Left colon (tissue), 2 donors: ENCODE measurements at regions of chr18 and their contacts with region 1.

Region 1: DNA sequence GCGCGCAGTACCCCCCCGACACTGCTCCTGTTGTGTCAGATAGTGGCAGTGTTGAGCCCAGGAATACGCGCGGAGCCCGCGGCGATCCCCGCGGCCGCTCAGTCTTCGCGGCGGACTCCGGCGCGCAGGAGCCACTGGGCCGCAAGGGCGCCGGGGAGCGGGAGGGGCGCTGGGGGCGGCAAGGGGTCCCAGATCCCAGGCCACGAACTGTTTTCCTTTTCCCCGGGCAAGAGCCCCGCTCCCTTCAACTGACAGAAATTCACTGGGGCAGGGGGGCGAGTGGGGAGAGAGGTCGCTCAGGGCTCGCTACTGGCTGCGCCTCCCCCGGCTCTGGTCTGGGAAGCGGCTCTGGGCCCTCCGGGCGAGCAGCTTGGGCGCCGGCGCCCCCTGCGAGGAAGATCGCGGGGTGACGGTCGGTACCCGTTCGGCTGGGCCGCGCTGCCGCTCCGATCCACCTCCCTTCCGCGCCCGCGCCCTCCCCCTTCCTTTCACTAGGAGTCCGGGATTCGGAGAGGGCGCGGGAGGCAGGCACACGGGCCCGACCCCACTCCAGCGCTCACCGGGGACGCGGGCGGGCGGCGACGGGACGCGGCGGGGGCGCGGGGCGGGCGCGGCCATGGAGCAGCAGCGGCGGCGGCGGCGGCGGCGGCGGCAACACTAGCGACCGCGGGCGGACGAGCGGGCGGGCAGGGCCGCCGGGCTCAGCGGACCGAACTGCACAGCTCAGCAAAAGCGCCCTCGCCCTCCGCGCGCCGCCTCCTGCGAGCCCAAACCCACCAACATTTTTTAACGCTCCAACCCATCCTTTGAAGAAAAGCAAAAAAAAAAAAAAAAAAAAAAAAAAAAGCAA is 1.4 kb upstream of the SETBP1 start:
- DNase-seq: peak; percentile 89
- ATAC-seq: peak; percentile 96

Region 2: DNA sequence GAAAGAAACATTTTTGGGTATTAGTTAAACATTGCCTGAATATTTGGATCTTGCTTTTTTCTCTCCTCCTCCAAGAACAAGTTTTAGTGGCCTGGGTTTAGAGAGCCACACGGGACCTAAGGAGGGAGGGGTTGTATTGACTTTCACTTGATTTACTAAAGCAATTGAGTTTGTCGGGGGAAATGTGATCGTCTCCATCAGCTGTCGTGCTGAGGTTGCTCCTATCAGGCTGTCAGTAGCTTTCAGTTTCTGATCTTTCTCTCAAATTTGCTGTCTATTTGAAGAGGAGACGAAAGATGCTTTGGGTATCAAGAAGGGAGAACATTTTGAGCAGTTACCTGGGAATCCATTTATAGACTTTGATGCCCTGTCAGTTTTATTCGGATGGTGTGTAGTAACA is 107.4 kb after region 1 on chr18:
- intact Hi-C with region 1: loop called in 1 of 2 experiments (anchors 10 kb)
- DNase-seq: no peak
- ATAC-seq: no peak

Region 3: GRCh38 chr18:44895176-44895798 is 216.0 kb after region 1 on chr18:
- intact Hi-C with region 1: loop called in 1 of 2 experiments (anchors 5 kb)
- DNase-seq: peak; percentile 60 to 66
- ATAC-seq: peak; percentile 99

Region 4: DNA sequence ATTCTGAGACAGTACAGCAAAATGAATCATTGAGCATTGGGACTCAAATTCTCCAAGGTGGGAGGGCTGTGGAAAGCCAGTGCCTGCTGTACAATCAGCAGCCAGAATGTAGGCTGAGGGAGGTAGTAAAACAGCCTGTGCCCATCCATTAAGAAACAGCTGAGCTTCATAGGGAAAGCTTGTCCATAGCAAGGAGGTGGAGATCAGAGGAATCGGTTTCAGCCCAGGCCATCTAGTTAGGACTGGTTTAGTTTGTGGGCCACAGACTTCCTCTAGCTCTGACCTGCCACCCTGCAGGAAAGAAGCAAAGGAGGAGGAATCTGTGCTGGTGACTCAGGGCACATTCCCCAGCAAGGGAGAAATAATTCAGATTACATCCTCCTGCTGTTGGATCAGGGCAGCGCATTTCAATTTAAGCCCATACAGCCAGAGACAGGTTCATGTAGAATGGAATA is 334.8 kb after region 1 on chr18:
- intact Hi-C with region 1: loop called in 1 of 2 experiments (anchors 10 kb)
- DNase-seq: peak in 1 of 2 donors; percentile 40
- ATAC-seq: no peak

Region 5: GRCh38 chr18:45212181-45213039 is 533.1 kb after region 1 on chr18:
- intact Hi-C with region 1: loop called in 1 of 2 experiments (anchors 5 kb)
- DNase-seq: peak; percentile 73 to 90
- ATAC-seq: peak; percentile 99